ENCODE measurements at regions of chr19 and their contacts with region 1.

Region 1: DNA sequence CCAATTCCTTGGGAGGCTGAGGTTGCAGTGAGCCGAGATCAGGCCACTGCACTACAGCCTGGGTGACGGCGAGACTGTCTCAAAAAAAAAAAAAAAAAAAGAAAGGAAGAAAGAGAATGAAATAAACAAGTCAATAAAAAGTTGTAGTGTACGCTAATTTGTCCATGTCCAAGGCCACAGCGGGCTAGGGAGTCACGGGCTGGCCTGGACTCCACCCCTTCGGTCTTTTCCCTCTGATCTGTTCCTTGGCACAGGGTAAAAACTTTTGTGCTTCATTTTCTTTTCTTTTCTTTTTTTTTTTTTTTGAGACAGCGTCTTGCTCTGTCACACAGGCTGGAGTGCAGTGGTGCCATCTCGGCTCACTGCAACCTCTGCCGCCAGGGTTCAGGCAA is 19.4 kb upstream of the MKNK2 start:
- DNase-seq: no peak
- H3K4me3 ChIP-seq: no peak overlapping the region
- H3K27ac ChIP-seq: peak overlapping the region in 1 of 5 donors; percentile 39
- H3K4me1 ChIP-seq: peaks cover 7 to 42% (median 15%) of the 10 kb centered on the region in 4 donors
- H3K27me3 ChIP-seq: no peaks in the 10 kb centered on the region
- CTCF ChIP-seq: no peak
- EP300 ChIP-seq: no peak
- POLR2A ChIP-seq: no peak

Region 2: GRCh38 chr19:1935484-1936208 is 134.8 kb before region 1 on chr19:
- intact Hi-C with region 1: loop called (anchors 10 kb)
- DNase-seq: peak in 1 of 2 donors; percentile 36
- H3K4me3 ChIP-seq: no peak overlapping the region
- H3K27ac ChIP-seq: no peak overlapping the region
- H3K4me1 ChIP-seq: peaks cover 4 to 19% (median 12%) of the 10 kb centered on the region in 4 donors
- H3K27me3 ChIP-seq: no peaks in the 10 kb centered on the region
- CTCF ChIP-seq: no peak
- EP300 ChIP-seq: no peak
- POLR2A ChIP-seq: no peak

Region 3: GRCh38 chr19:2021453-2022140 is 48.8 kb before region 1 on chr19:
- intact Hi-C with region 1: loop called (anchors 5 kb)
- DNase-seq: no peak
- H3K4me3 ChIP-seq: no peak overlapping the region
- H3K27ac ChIP-seq: no peak overlapping the region
- H3K4me1 ChIP-seq: peaks cover 0 to 12% (median 4%) of the 10 kb centered on the region in 4 donors
- H3K27me3 ChIP-seq: no peaks in the 10 kb centered on the region
- CTCF ChIP-seq: no peak
- EP300 ChIP-seq: no peak
- POLR2A ChIP-seq: no peak